Left cardiac atrium (tissue), 4 donors: ENCODE measurements at regions of chr19 and their contacts with region 1.

Region 1: DNA sequence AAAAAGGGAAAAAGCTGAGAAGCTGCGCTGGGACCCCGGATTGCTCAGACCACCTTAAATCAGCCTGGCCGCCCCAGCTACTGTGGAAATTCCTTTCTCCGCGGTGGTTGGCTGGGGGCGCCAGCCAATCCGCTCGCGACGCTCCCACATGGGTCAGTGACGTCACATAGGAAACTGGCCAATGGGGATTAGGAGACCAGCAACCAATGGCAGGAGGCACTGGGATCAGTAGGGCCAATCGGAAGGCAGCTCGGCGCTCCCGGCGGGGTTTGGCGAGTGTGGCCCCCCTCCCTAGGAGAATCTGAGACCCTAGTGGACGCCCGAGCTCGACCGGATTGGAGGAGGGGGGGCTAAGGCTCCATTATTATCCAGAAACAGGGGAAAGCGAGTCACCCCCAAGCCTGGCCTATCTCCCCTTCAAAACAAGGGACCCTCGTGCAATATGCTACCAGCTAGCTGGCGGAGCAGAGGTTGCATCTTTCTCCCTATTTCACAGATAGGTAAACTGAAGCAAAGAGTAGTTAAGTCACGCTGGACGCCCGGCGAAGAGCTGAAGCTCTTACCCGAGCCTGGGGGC is 6.5 kb upstream of the TLE2 start:
- DNase-seq: peak; percentile 99
- ATAC-seq: peak; percentile 95 to 97

Region 2: GRCh38 chr19:2977001-2977685 is 58.5 kb before region 1 on chr19 and contains the start of gene TLE6:
- intact Hi-C with region 1: loop called (anchors 5 to 10 kb)
- DNase-seq: peak; percentile 97
- ATAC-seq: peak; percentile 95 to 97
- total RNA-seq, gene TLE6: 0.65 to 1.9 TPM

Region 3: GRCh38 chr19:2983351-2984195 is 52.1 kb before region 1 on chr19:
- intact Hi-C with region 1: loop called (anchors 5 to 10 kb)
- DNase-seq: peak; percentile 79
- ATAC-seq: peak; percentile 67 to 68

Region 4: GRCh38 chr19:3284759-3285646 is 249.4 kb after region 1 on chr19:
- intact Hi-C with region 1: no loop called
- DNase-seq: peak; percentile 88
- ATAC-seq: peak; percentile 84 to 90